ENCODE measurements at regions of chr17 and their contacts with region 1.

Region 1: DNA sequence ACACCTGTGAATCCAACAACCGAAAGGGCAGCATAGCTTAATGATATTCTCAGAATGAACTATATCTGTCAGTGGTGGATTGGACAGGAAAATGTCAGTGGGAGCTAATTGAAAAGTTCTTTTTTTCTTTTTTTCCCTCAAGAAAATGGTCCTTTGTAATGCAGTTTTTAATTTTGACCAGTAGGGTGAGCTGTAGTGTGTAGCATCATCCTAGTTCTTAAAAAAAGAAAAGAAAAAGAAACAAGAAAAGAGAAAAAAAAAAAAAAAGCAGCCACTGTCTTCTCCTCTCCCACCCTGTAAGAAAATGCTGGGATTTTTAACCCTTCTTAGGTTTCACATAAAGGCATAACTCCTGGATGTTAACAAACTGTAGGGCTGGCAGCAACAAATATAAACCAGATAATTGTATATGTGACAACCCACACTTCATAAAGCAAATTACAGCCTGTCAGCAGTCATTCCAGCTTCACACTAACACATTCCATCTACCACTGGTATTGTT is 78.1 kb downstream of the SKAP1 start:
- DNase-seq: no peak
- H3K4me3 Mint-ChIP-seq: no peak overlapping the region
- H3K27ac Mint-ChIP-seq: no peak overlapping the region
- H3K4me1 Mint-ChIP-seq: peaks cover 8% of the 10 kb centered on the region
- H3K27me3 Mint-ChIP-seq: no peaks in the 10 kb centered on the region

Region 2: GRCh38 chr17:48084932-48085444 is 266.9 kb before region 1 on chr17:
- CTCF ChIA-PET with region 1: no interaction called
- intact Hi-C with region 1: no loop called
- DNase-seq: no peak
- H3K4me3 Mint-ChIP-seq: no peak overlapping the region
- H3K27ac Mint-ChIP-seq: no peak overlapping the region
- H3K4me1 Mint-ChIP-seq: peaks cover 4% of the 10 kb centered on the region
- H3K27me3 Mint-ChIP-seq: no peaks in the 10 kb centered on the region

Region 3: GRCh38 chr17:48162946-48163506 is 188.9 kb before region 1 on chr17:
- CTCF ChIA-PET with region 1: no interaction called
- intact Hi-C with region 1: no loop called
- DNase-seq: no peak
- H3K4me3 Mint-ChIP-seq: no peak overlapping the region
- H3K27ac Mint-ChIP-seq: no peak overlapping the region
- H3K4me1 Mint-ChIP-seq: peaks cover 17% of the 10 kb centered on the region
- H3K27me3 Mint-ChIP-seq: no peaks in the 10 kb centered on the region

Region 4: GRCh38 chr17:48241131-48241591 is 110.7 kb before region 1 on chr17:
- CTCF ChIA-PET with region 1: no interaction called
- intact Hi-C with region 1: no loop called
- DNase-seq: peak; percentile 34
- H3K4me3 Mint-ChIP-seq: no peak overlapping the region
- H3K27ac Mint-ChIP-seq: no peak overlapping the region
- H3K4me1 Mint-ChIP-seq: peaks cover 70% of the 10 kb centered on the region
- H3K27me3 Mint-ChIP-seq: no peaks in the 10 kb centered on the region

Region 5: DNA sequence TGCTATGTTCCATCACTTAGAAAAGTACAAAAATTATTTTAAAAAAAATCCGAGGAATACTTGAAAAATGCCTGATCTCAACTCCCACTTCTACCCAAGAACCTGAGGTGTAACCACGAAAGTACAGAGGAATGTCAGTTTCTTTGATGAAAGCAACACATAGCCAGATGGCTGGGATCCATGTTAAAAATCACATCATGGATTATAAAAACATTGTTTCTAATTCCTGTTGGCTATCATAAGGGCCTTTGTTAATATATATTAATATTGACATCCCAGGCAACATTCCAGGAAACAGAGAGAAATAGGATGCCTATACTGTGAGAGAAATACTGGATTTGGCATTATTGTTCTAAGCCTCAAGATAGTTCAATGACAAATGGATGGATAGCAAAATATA is 37.2 kb before region 1 on chr17:
- CTCF ChIA-PET with region 1: no interaction called
- intact Hi-C with region 1: no loop called
- DNase-seq: no peak
- H3K4me3 Mint-ChIP-seq: no peak overlapping the region
- H3K27ac Mint-ChIP-seq: no peak overlapping the region
- H3K4me1 Mint-ChIP-seq: peaks cover 11% of the 10 kb centered on the region
- H3K27me3 Mint-ChIP-seq: no peaks in the 10 kb centered on the region

Region 6: DNA sequence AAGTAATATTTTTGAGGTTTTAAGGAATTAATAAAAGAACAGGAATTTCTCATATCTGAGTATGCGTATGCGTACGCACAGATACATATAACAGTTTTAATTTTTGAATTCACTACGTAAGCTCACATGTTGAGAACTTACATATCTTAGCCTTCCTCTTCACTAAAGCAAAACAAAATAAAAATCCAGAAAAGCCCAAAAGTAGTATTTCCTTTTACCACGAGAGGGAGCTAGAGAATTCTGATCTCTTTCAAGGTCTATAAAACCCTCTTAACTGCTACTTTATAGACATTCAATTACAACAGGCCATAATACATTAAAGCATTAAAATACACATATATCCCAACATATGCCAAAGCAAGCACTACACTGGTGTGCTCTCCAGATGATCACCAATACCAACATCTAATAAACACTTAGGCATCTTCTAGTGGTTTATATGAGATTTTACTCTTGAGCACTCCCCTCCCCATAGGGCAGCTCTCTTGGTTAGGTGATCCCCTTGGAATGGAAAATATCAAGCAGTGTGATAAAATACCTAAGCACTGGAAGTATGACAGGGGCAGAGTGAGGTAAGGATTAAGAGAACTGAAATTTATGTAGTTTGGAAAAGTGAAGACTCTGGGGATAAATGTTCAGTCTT is 15.9 kb before region 1 on chr17:
- CTCF ChIA-PET with region 1: interaction called, 24 read pairs
- intact Hi-C with region 1: no loop called
- DNase-seq: no peak
- H3K4me3 Mint-ChIP-seq: no peak overlapping the region
- H3K27ac Mint-ChIP-seq: no peak overlapping the region
- H3K4me1 Mint-ChIP-seq: peaks cover 6% of the 10 kb centered on the region
- H3K27me3 Mint-ChIP-seq: no peaks in the 10 kb centered on the region

Region 7: GRCh38 chr17:48374650-48375230 is 22.9 kb after region 1 on chr17:
- CTCF ChIA-PET with region 1: interaction called, 21 read pairs
- intact Hi-C with region 1: no loop called
- DNase-seq: peak; percentile 47
- H3K4me3 Mint-ChIP-seq: no peak overlapping the region
- H3K27ac Mint-ChIP-seq: no peak overlapping the region
- H3K4me1 Mint-ChIP-seq: peaks cover 29% of the 10 kb centered on the region
- H3K27me3 Mint-ChIP-seq: no peaks in the 10 kb centered on the region

Region 8: GRCh38 chr17:48457080-48457836 is 105.4 kb after region 1 on chr17:
- CTCF ChIA-PET with region 1: interaction called, 21 read pairs
- intact Hi-C with region 1: loop called (anchors 1 kb)
- DNase-seq: peak; percentile 83
- H3K4me3 Mint-ChIP-seq: peak overlapping the region; percentile 66
- H3K27ac Mint-ChIP-seq: no peak overlapping the region
- H3K4me1 Mint-ChIP-seq: peaks cover 47% of the 10 kb centered on the region
- H3K27me3 Mint-ChIP-seq: no peaks in the 10 kb centered on the region

Region 9: DNA sequence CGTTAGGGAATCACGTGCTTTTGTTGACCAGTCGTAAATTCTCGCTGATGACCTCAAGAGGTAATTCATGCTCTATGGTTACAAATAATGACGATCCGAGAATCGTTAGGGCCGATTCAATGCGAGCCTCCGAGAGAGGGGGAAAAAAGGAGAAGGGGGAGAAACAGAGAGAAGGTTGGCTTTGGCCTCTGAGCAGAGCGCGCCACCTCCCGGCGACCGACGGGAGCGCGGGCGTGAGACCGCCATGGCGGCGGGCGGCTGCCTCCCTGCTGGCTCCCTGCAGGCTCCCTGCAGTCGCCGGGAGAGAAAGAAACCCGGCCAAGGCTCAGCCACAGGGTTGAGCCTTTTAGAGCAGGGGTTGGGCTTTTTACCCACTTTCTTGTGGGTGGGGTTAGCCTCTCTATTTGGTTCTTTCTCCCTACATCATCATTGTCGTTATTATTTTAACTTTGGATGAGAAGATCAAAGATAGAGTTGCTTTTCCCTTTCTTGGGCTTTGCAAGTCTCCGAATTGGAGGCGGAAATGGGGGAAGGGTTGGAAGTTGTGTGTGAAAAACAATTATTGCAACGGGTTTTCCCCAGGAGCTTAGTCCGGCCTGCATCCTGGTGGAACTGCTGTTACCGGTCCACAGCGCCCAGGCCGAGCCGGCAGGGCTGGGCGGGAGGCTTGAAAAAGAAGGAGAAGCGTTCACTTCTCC is 242.1 kb after region 1 on chr17:
- CTCF ChIA-PET with region 1: interaction called, 12 read pairs
- intact Hi-C with region 1: no loop called
- DNase-seq: peak; percentile 87
- H3K4me3 Mint-ChIP-seq: peak overlapping the region; percentile 77
- H3K27ac Mint-ChIP-seq: no peak overlapping the region
- H3K4me1 Mint-ChIP-seq: peaks cover 36% of the 10 kb centered on the region
- H3K27me3 Mint-ChIP-seq: peaks cover 90% of the 10 kb centered on the region

Measured in activated naive CD4-positive, alpha-beta T cell treated with anti-CD3 and anti-CD28 coated beads for 36 hours (primary cell).